ENCODE measurements at regions of chr14 and their contacts with region 1.

Region 1: DNA sequence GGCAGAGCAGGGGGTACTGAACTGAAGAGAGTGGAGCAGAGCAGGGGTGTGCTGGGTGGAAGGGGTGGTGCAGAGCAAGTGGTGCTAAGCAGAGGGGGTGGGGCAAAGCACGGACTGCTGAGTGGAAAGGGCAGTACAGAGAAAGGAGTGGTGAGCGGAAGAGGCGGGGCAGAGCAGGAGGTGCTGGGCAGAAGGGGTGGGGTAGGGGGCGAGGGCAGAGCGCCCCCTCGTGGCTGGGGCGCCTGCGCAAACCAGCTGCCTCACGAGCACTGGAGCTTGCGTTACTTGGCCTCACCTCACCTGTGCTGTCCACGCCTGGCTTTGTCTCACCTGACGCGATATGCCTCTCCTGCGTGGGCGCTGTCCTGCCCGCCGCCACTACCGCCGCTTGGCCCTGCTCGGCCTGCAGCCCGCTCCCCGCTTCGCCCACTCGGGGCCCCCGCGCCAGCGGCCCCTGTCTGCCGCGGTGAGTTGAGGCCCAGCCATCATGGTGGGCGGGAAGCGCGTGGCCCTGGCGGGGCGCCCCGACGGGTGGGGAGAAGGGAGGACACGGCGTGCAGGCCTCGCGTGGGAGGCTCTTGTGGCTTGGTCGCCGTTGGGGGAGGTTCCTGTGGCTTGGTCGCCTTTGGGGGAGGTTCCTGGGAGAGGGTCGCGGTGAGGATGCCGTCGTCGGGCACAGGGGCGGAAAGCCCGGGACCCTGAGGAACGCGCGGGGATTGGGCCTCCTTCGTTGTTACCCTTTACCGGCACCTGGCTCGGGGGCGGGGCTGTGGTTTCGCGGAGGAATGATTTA is at the start of gene COX8C:
- DNase-seq: no peak
- ATAC-seq: no peak
- H3K4me3 ChIP-seq: no peak within 1 kb of the TSS
- H3K27ac ChIP-seq: no peak within 1 kb of the TSS
- H3K4me1 ChIP-seq: no peaks in the 10 kb centered on the region
- H3K27me3 ChIP-seq: no peaks in the 10 kb centered on the region
- CTCF ChIP-seq: no peak
- POLR2A ChIP-seq: no peak
- RAD21 ChIP-seq: no peak
- total RNA-seq, gene COX8C: not detected in 2 replicates

Region 2: DNA sequence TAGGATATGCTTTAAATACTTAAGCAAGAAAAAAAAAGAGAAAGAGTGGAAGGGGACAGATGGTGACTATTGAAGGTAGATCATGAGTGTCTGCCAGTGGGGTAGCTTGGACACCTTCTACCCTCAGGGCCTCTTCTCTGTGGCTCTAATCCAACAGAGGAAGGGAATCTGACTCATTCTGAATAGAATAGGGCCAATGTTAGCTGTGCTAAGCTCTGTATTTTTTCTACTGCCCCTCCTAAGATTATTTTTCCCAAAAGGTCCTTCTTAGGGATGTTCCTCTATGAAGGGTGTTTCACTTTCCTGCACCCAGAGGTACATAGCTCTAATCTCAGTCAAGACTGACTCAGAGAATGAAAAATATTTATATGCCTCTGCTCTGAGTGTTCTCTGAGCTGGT is 109.2 kb after region 1 on chr14:
- CTCF ChIA-PET with region 1: interaction called, 3 read pairs
- POLR2A ChIA-PET with region 1: no interaction called
- dilution Hi-C with region 1: no loop called
- in situ Hi-C with region 1: no loop called
- intact Hi-C with region 1: loop called (anchors 10 kb)
- DNase-seq: no peak
- ATAC-seq: no peak
- H3K4me3 ChIP-seq: no peak overlapping the region
- H3K27ac ChIP-seq: no peak overlapping the region
- H3K4me1 ChIP-seq: no peaks in the 10 kb centered on the region
- H3K27me3 ChIP-seq: no peaks in the 10 kb centered on the region
- CTCF ChIP-seq: no peak
- POLR2A ChIP-seq: no peak
- RAD21 ChIP-seq: no peak